Left ventricle myocardium superior (tissue), 1 donor: ENCODE measurements at regions of chr20 and their contacts with region 1.

Region 1: GRCh38 chr20:48657475-48658470 is 170.0 kb downstream of the PREX1 start:
- DNase-seq: peak; percentile 67
- ATAC-seq: peak; percentile 86

Region 2: DNA sequence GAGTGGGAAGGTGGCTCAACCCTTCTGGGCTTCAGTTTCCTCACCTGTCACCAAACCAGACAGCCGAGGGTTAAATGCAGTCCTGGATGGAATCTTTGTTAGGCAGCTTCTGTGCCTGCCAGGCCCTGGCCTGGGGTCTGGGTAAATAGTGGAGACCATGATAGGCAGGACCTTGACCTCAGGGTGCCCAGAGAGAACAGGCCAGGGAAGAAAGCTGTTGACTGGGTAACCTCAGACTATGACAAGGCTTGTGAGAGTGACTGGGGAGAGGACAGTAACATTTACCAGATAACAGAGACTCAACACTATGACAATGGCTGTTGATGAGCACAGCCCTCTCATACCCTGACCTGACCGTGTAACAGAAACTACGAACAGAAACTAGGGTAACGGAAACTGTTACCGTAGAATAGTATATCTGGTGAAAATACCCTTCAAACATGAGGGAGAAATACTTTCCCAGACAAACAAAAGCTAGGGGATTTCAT is 48.2 kb before region 1 on chr20:
- intact Hi-C with region 1: no loop called
- DNase-seq: no peak
- ATAC-seq: no peak

Region 3: DNA sequence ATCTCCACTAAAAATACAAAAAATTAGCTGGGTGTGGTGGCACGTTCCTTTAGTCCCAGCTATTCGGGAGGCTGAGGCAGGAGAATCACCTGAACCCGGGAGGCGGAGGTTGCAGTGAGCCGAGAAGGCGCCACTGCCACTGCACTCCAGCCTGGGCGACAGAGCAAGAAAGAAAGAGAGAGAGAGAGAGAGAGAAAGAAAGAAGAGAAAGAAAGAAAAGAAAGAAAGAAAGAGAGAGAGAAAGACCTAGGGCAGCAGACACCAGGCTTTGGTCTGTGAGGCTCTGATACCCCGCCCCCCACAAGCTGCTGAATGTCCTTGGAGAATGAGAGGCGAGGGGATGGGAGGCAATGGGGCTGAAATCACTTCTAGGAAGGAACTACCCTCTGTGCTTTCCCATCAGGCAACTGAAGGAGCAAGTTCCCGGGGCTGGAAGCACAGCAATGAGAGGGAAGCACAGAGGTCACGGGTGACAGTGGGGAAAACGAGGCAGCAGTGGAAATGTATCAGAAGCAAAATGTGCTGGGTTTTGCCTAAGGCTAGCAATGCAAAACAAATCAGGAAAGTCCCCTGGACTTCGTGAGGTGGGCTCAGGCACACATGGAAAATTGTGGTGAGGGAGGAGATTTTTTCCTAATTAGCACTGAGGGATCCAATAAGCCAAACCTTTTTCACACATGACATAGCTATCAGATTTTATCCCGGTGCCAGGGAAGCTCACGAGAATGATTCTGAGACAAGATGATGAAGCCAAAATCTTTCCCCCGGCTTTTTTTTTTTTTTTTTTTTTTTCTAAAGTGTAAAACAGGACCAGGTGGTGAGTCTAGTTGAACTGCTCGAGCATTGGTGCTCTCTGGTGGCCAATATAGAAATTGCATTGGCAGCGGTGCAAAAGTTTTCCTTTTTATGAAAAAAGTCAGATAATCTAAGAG is 246.9 kb after region 1 on chr20:
- intact Hi-C with region 1: loop called (anchors 5 kb)
- DNase-seq: peak; percentile 46
- ATAC-seq: peak; percentile 60